ENCODE measurements at regions of chr6 and their contacts with region 1.

Region 1: DNA sequence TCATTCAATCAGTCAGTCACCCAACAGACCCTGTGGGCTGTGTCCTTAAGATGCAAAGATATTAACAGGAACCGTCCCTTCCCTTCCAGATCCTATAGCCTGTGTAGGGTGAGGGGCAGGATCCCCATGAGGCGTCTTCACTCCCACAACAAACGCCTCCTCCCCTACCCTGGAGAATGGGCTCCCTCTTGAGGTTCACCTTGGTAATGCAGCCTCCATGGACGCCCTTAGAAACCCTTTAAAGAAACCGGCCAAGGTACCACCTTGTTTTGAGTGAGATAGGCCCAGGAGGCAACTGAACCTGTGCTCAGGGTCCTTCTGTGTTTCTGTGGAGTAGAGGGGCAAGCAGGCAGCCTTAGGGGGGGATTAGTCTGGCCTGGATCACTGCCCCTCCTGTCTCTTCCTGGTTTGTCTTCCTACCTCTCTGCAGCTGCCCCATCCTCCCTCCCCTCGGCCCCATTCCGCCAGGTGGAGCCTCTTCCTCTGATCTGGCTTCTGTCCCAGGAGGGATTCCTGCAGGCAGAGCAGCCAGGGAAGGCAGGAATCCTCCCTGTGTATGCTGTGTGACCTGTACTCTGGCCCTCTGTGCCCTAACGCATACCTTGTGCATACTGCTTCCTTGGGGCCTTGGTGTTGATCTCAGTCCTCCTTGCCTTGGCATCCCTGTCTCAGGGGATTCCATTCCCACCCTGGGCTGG is 6.6 kb upstream of the GUCA1A start:
- DNase-seq: peak; percentile 55 to 68 (median 57)
- ATAC-seq: peak; percentile 90 to 96 (median 92)
- H3K4me3 ChIP-seq: no peak overlapping the region
- H3K27ac ChIP-seq: no peak overlapping the region
- H3K4me1 ChIP-seq: no peaks in the 10 kb centered on the region
- H3K27me3 ChIP-seq: no peaks in the 10 kb centered on the region
- CTCF ChIP-seq: peak; percentile 94 to 97 (median 95)
- POLR2A ChIP-seq: no peak

Region 2: DNA sequence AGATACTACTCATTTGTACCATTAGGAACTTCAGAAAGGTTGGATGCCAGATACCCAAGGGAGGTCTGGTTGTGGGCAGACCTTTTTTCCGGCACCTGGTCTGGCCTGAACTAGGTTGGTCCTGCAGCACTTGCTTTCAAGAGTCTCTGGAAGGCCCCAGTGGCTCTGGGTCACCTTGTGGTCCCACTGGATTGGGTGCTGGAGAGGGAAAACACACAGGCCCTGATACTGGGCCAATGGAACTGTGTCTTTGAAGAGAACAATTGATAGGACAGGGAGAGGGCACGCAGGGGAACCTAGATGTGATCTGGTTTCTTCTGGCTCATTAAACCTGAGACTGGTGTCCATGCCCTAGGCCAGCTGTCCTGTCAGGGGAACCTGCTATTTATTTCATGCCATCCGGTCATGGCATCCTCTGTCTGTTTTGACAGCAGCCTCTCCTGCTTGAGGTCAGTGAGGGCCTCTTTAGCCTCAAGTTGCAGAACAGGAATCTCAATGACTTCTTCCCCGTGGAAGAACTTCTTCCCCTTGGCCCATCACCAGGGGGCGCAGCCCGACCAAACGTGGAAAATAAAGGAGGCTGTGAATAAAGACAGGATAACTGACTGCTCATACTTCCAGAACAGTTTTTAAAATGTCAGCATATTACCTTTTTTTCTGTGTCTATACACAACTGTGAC is 91.3 kb before region 1 on chr6:
- intact Hi-C with region 1: loop called (anchors 5 kb)
- DNase-seq: peak; percentile 72 to 74 (median 73)
- ATAC-seq: peak; percentile 67 to 84 (median 74)
- H3K4me3 ChIP-seq: no peak overlapping the region
- H3K27ac ChIP-seq: no peak overlapping the region
- H3K4me1 ChIP-seq: no peaks in the 10 kb centered on the region
- H3K27me3 ChIP-seq: no peaks in the 10 kb centered on the region
- CTCF ChIP-seq: peak; percentile 67 to 83 (median 76)
- POLR2A ChIP-seq: no peak

Region 3: GRCh38 chr6:42224222-42224989 is 57.8 kb after region 1 on chr6:
- intact Hi-C with region 1: loop called in 1 of 2 experiments (anchors 10 kb)
- DNase-seq: no peak
- ATAC-seq: no peak
- H3K4me3 ChIP-seq: no peak overlapping the region
- H3K27ac ChIP-seq: no peak overlapping the region
- H3K4me1 ChIP-seq: peaks cover 0 to 9% (median 0%) of the 10 kb centered on the region in 4 donors
- H3K27me3 ChIP-seq: no peaks in the 10 kb centered on the region
- CTCF ChIP-seq: no peak
- POLR2A ChIP-seq: no peak

Region 4: GRCh38 chr6:42294759-42295158 is 128.2 kb after region 1 on chr6:
- intact Hi-C with region 1: no loop called
- DNase-seq: no peak
- ATAC-seq: peak in 1 of 4 donors; percentile 46
- H3K4me3 ChIP-seq: no peak overlapping the region
- H3K27ac ChIP-seq: no peak overlapping the region
- H3K4me1 ChIP-seq: no peaks in the 10 kb centered on the region
- H3K27me3 ChIP-seq: no peaks in the 10 kb centered on the region
- CTCF ChIP-seq: no peak
- POLR2A ChIP-seq: no peak